ENCODE measurements at regions of chr7 and their contacts with region 1.

Region 1: DNA sequence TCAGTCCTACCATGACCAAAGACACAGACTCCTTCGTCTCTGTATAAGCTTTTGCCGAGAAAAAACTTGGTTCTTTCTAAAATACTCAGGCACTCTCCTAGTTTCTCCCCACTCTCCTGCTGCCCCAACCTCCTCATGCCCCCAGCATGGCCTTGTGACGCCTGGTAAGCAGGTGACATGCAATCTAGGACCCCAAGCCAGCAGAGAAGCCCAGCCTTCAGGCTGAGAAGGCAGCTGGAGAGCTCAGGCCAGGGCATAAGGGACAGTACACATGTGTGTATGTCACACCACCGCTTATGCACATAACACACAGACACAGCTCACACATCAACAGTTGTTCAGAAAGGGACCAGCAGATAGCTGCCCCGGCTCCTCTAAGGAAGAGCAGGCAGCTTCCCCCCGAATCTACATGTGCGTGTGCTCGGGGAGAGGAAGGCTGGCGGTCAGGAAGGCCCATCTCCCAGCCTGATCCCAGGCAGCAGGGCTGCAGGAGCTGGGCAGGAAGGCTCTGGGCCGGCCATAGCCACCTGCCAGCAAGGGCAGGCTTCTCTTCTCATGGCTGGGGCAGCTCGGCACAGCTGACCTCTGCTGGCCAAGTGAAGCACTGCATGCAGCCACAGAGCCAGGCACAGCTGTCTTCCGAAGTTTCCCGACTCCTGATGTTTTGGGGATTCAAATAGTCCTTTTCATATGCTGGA is 8.5 kb downstream of the DDX56 start:
- DNase-seq: no peak
- H3K4me3 ChIP-seq: no peak overlapping the region
- H3K27ac ChIP-seq: no peak overlapping the region
- H3K27me3 ChIP-seq: no peaks in the 10 kb centered on the region
- CTCF ChIP-seq: peak; percentile 99

Region 2: DNA sequence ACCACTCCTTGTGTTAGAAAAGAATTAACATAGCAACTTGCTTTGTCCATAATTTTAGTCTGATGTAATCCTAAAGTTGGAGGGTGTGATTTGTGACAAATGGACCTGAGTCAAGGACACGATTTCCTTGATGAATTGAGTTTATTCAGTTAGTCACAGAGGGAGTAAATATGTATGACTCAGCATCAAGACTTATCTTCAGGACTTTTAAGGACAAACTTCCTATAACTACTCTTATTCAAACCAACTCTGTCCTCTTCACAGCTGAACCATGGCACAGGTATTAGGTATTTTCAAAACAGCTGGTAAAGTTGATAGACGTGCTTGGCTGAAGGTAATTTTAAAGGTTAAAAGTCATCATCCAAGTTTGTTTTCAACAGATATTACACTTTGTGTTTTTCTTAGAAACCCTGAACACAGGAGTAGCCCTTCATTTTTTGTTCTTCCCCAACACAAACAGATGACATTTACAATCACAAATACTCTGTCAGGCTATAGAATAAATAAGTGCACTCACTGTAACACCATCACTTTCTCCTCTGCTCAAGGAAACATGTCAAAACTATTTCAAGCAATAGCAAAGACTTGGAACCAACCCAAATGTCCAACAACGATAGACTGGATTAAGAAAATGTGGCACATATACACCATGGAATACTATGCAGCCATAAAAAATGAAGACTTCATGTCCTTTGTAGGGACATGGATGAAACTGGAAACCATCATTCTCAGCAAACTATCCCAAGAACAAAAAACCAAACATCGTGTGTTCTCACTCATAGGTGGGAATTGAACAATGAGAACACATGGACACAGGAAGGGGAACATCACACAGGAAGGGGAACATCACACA is 890.4 kb before region 1 on chr7:
- CTCF ChIA-PET with region 1: no interaction called
- POLR2A ChIA-PET with region 1: no interaction called
- DNase-seq: no peak
- H3K4me3 ChIP-seq: no peak overlapping the region
- H3K27ac ChIP-seq: peak overlapping the region; percentile 3
- H3K27me3 ChIP-seq: no peaks in the 10 kb centered on the region
- CTCF ChIP-seq: no peak

Region 3: GRCh38 chr7:44348300-44348699 is 216.9 kb before region 1 on chr7:
- CTCF ChIA-PET with region 1: interaction called, 46 read pairs
- POLR2A ChIA-PET with region 1: no interaction called
- DNase-seq: peak; percentile 4
- H3K4me3 ChIP-seq: no peak overlapping the region
- H3K27ac ChIP-seq: no peak overlapping the region
- H3K27me3 ChIP-seq: peaks cover 7% of the 10 kb centered on the region
- CTCF ChIP-seq: peak; percentile 58

Region 4: GRCh38 chr7:44484482-44485313 is 80.5 kb before region 1 on chr7:
- CTCF ChIA-PET with region 1: interaction called, 38 read pairs
- POLR2A ChIA-PET with region 1: no interaction called
- DNase-seq: no peak
- H3K4me3 ChIP-seq: no peak overlapping the region
- H3K27ac ChIP-seq: no peak overlapping the region
- H3K27me3 ChIP-seq: no peaks in the 10 kb centered on the region
- CTCF ChIP-seq: no peak

Region 5: DNA sequence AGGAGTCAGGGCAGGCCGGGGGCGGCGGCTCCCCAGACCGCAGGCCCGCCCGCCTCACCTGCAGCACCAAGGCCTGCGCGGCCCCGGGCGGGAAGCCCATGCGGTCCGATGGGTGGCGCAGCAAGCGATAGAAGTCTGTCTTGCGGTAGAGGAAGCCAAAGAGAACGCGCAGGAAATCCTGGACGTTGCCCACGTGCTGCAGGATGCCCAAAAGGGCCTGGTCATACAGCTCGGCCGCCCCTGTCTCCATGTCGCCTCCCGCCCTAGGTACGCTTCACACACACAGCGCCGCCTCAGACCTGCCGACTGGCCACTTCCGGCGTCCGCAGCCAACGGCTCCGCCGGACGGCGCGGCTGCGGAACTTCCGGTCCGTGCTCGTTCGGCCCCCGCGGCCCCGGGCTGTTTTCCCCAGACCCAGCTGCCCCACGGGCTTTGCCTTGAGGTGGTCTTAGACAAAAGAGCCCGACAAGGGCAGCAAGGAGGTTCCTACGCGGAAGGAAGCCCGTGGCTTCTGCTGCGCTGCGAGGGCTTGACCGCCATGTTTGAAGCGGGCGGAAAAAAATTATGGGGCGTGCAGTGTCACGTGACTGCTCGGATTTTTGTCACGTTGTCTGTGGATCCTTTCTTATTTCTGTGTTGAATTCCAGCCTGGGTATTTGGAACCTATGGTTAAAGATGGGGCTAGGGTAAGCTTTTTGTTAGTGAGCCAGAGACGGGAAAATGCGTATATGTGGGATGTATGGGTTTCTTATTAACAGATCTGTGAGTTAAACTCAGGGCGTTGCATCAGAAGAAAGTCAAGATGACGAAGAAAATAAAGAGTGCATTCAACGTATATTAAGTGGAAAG is 74.7 kb before region 1 on chr7 and contains the start of gene NUDCD3:
- CTCF ChIA-PET with region 1: interaction called, 38 read pairs
- POLR2A ChIA-PET with region 1: no interaction called
- DNase-seq: peak; percentile 30
- H3K4me3 ChIP-seq: peak within 1 kb of the TSS; percentile 95
- H3K27ac ChIP-seq: peak within 1 kb of the TSS; percentile 99
- H3K27me3 ChIP-seq: no peaks in the 10 kb centered on the region
- CTCF ChIP-seq: peak; percentile 34; the same call in 1 of the 2 replicates
- polyA plus RNA-seq, gene NUDCD3: 61.4 and 77.0 TPM in 2 replicates

Region 6: DNA sequence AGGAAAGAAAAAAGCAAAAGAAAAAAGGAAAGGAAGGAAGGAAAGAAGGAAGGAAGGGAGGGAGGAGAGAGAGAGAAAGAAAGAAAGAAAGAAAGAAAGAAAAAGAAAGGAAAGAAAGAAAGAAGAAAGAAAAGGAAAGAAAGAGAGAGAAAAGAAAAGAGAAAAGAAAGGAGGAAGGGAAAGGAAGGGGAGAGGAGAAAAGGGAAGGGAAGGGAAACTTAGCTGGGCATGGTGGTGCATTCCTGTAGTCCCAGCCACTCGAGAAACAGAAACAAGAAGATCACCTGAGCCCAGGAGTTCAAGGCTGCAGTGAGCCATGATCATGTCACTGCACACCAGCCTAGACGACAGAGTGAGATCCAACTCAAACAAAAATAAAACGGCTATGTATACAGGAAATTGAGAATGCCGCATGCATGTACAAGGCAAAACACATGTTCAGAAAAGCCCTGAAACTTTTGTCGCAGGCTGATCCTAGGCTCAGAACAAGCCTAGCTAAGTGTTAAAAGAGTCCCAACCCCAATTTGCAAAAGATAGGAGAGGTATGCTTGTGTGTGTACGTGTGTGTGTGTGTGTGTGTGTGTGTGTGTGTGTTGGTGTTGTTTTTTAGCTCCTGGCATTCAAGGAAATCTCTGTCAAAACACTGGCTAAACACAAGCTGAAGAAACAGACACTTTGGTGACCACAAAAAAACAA is 17.6 kb before region 1 on chr7:
- CTCF ChIA-PET with region 1: interaction called, 14 read pairs
- POLR2A ChIA-PET with region 1: no interaction called
- DNase-seq: no peak
- H3K4me3 ChIP-seq: no peak overlapping the region
- H3K27ac ChIP-seq: no peak overlapping the region
- H3K27me3 ChIP-seq: peaks cover 19% of the 10 kb centered on the region
- CTCF ChIP-seq: no peak